Cardiac septum (tissue), 1 donor: ENCODE measurements at regions of chr4 and their contacts with region 1.

Region 1: DNA sequence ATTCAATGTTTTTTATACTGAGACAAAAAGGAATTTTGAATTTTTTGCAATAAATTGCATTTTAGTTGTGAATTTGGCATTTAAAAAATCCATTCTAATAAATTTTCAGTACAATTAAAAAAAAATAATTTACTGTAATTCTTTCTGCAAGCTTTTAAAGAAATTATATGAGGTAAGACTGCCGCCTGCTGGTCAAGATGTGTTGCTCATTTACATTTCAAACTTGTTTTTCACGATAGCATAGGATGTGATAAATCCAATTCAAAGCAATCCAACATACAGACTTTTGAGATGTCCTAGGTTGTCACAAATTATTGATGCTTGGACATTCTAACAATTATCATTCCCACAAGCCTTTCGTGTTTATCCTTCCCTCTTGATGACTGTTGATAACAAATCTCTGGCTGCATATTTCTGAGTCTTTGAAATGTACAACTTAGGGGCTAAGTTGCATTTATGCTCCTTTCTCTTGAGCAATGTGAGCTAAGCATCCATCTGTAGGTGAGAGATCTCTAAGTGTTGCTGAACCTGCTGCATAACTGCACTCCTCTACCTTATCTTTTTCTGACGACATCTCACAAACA is 21.7 kb upstream of the MFAP3L start:
- DNase-seq: no peak

Region 2: GRCh38 chr4:169810325-169811323 is 237.2 kb before region 1 on chr4:
- intact Hi-C with region 1: loop called (anchors 2 kb)
- DNase-seq: no peak

Region 3: GRCh38 chr4:169940450-169940849 is 107.4 kb before region 1 on chr4:
- intact Hi-C with region 1: no loop called
- DNase-seq: no peak

Region 4: DNA sequence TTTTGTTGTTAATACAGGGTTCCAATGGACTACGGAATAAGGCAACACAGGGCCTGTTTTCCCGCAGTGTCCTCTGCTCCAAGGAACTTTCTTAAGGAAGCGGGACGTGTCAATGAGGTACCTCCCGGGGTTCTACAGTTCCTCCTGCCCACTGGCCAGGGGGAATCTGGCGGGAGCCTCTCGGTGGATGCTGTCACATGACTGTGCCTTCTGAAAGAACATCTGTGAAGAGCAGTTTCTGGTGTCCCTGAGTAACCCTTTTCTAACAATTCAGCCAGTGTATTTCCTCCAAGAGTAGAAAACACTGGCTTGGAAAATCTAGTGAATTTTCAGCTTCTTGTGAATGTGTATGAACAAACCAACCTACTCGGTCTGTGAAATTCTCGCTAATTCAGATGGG is 54.3 kb before region 1 on chr4:
- intact Hi-C with region 1: no loop called
- DNase-seq: no peak